Brain microvascular endothelial cell (primary cell): ENCODE measurements at regions of chr5 and their contacts with region 1.

Region 1: DNA sequence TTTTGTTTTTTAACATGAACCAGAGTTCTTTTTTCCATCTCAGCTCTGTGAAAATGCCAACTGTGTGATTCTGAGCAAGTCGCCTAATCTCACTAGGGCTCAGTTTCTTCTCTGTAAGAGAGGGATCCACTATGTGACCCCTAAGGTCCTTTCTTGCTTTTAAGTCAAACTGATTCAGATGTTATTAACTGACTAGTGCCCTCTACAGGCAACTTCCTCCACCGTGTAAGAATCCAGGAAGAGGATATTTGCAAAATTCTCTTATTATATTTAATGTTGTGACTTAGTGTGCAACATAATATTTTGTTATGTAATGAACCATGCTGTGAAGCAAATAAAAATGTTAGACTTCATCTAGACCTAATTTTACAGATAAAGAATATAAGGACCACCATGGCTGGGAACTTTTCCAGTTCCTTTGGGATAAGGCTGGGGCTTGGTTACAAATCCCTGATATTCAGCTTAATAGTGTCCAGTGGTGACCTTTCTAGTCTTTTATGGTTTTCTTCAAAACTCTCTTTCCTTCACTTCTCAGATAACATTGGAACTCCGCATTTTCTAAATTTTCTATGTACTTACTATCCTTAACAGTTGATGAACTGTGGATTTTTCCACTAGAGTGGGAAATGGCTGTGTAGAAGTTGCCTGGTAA is 244.7 kb downstream of the PIK3R1 start:
- DNase-seq: peak; percentile 67
- H3K4me3 ChIP-seq: no peak overlapping the region
- H3K27ac ChIP-seq: no peak overlapping the region
- H3K27me3 ChIP-seq: no peaks in the 10 kb centered on the region
- CTCF ChIP-seq: peak; percentile 69

Region 2: DNA sequence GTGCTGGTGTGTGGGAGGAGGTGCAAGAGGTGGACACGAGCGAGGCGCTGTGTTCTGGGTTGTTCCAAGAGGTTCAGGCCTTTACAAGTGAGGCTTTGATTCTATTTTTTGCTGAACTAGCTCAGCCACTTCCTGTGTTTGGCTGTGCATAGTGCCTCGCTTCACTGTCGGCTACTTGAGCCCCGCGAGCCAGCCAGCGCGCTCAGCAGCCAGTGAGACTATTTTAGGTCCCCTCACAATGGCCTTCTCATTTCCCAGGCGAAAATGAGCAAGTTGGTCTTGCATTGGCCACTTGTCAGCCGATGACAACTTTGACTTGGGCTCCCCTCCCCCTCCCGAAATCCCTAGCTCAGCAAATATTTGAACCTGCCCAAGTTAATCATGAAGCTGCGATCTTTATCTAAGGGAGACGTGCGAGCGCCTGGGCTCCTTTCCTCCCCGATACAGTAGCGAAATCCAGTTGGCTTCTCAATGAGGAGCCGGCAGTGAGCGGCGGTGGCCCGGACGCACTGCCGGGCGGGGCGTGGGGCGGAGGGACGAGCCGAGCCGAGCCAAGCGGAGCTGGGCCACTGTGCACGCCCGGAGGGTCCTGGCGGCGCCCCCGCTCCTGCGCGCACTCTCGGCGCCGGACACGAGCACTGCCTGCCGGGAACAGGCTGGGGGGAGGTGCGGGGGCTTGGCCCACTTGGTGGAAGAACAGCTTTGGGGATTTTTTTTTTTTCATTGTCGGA is 172.1 kb before region 1 on chr5:
- in situ Hi-C with region 1: loop called (anchors 25 kb)
- DNase-seq: peak; percentile 38
- H3K4me3 ChIP-seq: peak overlapping the region; percentile 55
- H3K27ac ChIP-seq: peak overlapping the region; percentile 52
- H3K27me3 ChIP-seq: no peaks in the 10 kb centered on the region
- CTCF ChIP-seq: no peak